Mucosa of descending colon (tissue), 3 donors: ENCODE measurements at regions of chr6 and their contacts with region 1.

Region 1: DNA sequence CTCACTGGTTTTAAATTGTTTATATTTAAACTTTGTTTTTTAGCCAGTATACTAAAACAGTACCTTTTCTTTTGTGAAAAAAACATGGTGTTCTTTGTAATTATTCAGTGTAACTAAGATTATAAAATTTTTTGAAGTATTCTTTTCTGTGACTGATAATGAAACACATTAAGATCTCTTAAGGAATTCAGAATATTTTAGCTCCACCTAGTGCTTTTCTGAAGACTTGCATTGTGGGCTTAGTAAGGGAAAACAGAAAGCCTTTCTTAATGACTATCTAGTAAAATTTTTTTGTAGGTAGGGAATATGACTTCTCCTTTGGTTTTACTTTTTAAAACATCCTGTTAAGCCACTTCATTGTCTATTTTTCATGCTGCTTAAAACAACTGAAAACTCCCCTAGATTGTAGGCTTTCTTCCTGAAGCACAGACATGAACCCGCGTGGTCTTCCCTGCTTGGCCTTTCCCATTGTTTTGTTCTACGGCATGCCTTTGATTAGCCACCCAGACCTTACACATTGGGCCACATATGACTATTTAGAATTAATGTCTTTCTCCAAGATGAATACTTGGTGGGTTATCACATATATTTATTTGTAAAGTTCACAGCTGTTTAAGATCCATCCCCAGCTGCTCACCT is 72.1 kb downstream of the AFDN start:
- DNase-seq: no peak
- ATAC-seq: peak; percentile 55
- H3K4me3 ChIP-seq: no peak overlapping the region
- H3K4me1 ChIP-seq: no peaks in the 10 kb centered on the region
- CTCF ChIP-seq: peak; percentile 42

Region 2: GRCh38 chr6:167119670-167120381 is 779.0 kb before region 1 on chr6:
- intact Hi-C with region 1: no loop called
- DNase-seq: peak in 2 of 3 donors; percentile 60 to 74
- ATAC-seq: peak; percentile 68
- H3K4me3 ChIP-seq: no peak overlapping the region
- H3K4me1 ChIP-seq: peaks cover 13% of the 10 kb centered on the region
- CTCF ChIP-seq: no peak

Region 3: DNA sequence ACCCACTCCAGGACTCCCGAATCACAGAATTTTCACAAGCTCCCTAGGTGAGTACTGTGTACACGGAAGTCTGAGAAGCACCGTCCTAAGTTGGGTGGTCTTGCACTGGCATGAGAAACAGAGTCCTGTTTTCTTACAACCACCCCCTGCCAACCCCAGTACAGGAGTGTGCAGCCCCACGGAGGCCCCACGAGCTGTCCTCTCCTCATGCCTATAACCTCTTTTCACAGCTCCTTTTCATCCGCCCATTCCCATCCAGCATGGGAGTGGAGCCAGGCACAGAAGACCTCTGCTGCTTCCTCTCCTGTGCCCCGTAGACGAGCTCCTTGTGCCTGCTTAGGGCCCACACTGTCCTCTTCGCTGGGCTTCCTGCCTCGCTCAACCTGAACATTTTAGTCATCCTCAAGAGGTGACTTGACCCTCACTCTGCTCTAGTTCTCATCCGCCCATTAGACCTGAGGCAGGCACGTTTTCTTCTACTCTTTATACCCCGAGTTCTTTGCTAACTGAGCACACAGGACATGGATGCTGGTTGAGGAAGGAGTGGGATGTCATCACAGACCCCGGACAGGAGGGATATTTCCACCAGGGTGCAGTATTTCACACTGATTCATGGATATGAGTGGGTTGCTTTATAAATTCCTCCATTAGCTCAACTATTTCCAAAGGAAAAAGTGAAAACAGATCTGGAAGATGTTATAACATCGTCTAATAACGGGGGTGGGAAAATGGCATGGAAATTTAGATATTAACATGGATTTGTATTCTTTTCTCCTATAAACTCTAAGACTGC is 413.4 kb before region 1 on chr6:
- intact Hi-C with region 1: loop called in 1 of 2 experiments (anchors 10 kb)
- DNase-seq: peak in 1 of 3 donors; percentile 40
- ATAC-seq: peak; percentile 18
- H3K4me3 ChIP-seq: no peak overlapping the region
- H3K4me1 ChIP-seq: no peaks in the 10 kb centered on the region
- CTCF ChIP-seq: no peak

Region 4: DNA sequence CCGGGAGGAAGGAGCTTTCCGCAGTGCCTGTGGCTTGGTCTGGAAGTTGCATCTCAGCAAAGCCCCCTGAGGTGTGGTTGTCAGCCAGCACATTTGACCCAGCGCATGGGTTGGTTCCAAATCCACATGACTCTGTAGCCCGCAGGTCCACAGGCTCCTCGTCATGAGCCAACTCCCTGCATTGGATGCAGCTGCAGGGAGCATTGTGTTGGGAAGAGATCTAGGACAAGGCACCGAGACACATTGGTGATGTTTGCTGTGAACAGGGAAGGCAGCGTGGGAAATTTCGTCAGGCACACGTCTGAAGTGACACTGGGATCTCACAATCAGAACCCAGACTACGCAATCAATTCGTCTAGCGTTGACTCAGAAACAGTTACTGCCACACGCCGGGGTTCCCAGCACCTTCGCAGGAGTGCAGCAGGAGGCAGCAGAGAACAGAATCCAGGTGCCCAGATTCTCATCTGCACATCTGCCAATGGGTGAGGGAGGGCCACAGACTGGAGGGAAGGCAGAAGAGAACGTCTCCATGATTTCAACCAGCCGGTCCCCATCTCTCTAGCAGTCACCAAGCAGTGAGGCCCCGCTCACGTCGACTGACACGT is 396.9 kb before region 1 on chr6:
- intact Hi-C with region 1: loop called in 1 of 2 experiments (anchors 10 kb)
- DNase-seq: peak in 2 of 3 donors; percentile 77 to 78
- ATAC-seq: peak; percentile 72
- H3K4me3 ChIP-seq: no peak overlapping the region
- H3K4me1 ChIP-seq: peaks cover 7% of the 10 kb centered on the region
- CTCF ChIP-seq: peak; percentile 39

Region 5: GRCh38 chr6:167826230-167826895 is 72.4 kb before region 1 on chr6:
- intact Hi-C with region 1: no loop called
- DNase-seq: peak; percentile 79 to 90 (median 88)
- ATAC-seq: peak; percentile 89
- H3K4me3 ChIP-seq: peak overlapping the region; percentile 54
- H3K4me1 ChIP-seq: peaks cover 22% of the 10 kb centered on the region
- CTCF ChIP-seq: peak; percentile 27